Posterior vena cava (tissue), 2 donors: ENCODE measurements at regions of chr15 and their contacts with region 1.

Region 1: GRCh38 chr15:44738340-44738984 is 2.1 kb downstream of the TRIM69 start:
- DNase-seq: no peak

Region 2: GRCh38 chr15:44584162-44584749 is 154.2 kb before region 1 on chr15:
- intact Hi-C with region 1: loop called in 1 of 2 experiments (anchors 10 kb)
- DNase-seq: no peak

Region 3: GRCh38 chr15:44606740-44607139 is 131.7 kb before region 1 on chr15:
- intact Hi-C with region 1: loop called in 1 of 2 experiments (anchors 10 kb)
- DNase-seq: no peak

Region 4: DNA sequence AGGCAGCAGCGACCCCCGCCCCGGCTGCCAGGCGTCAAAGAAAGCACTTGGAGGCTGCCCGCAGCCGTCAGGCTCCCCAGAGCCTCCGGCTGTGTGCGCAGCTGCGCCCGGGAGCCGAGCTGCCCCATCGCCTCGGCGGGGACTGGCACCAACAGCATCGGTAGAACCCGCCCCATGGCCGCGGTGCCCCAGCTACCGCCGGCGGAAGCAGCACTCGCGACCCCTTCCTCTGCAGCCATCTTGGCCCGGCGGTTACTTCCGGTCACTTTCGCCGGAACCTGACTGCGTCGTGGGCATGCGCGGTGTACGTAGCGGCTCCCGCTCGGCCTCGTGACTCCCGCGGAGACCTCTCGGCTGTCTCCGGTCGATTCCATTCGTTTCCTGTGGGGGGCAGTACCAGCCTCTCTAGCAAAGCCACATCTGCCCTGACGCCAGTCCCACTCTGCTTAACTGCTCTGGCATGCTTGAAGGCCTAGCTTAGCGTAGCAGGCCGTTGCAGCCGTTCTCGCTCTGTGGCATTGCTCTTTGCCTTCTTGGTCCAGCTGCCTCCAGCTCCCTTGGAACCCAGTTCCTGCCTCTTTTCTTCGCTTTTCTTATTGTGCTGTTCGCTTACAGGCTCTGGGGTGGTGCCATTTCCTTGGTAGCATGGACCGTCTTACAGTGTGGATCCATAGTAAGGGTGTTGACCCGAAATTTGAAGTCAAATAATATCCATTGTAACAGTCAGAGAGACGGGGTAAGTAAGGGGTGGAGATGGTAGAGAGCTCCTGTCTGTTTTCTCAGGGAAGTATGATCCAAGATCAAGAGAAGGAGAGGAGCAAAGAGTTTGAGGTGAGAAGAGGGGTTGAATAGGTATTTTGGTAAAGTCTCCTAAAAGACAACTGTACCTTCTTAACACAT is 74.8 kb before region 1 on chr15 and contains the start of gene SPG11:
- intact Hi-C with region 1: loop called (anchors 5 kb)
- DNase-seq: peak; percentile 100
- total RNA-seq, gene SPG11: 51.4 to 65.4 TPM

Region 5: GRCh38 chr15:44698641-44699040 is 39.8 kb before region 1 on chr15:
- intact Hi-C with region 1: no loop called
- DNase-seq: no peak